Cardiac septum (tissue), 1 donor: ENCODE measurements at regions of chr2 and their contacts with region 1.

Region 1: DNA sequence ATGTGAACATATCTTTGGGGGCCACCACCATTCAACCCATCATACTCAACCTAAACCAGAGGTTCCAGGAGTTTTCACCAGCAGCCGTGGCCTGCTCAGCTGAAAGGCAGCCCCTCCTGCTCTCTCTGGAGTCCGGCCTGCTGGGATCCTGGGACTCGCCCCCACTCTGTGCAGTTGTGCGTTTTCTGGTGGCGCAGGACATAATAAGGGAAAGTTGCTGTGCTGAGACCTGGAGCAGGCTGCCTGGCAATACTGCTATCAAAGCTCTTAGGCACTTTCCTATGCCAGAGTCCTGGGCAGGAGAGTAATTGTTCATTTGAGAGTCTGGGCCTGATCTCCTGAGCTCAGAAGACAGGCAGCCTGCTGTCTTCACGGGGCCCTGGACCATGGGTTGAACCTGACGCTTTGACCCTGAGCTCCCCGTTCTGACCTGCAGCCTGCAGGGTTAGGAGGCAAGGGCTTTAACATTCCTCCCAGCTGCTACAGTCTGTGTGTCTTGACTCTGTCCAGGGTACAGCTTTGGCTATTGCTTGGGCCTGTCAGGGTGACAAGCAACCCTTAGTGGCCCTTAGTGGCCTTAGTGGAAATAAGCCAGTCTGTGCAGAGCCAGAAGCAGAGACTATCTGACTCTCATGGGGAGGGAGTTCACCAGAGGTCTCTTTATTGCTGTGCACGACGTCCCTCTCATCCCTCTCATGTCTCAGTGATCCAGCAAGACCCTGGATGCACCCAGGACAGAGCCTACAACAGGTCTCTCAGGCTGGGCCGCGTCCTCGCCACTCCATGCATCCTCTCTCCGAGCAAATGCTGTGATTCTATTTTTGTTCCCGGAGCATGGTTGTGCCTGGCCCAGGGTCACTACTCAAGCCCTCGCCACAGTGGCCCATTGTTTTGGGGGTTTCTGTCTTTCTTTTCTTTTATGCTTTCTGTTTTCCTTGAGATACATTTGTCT is 60.6 kb downstream of the ACKR3 start:
- DNase-seq: peak; percentile 70

Region 2: GRCh38 chr2:236579746-236580315 is 50.4 kb before region 1 on chr2:
- intact Hi-C with region 1: loop called (anchors 5 kb)
- DNase-seq: no peak

Region 3: DNA sequence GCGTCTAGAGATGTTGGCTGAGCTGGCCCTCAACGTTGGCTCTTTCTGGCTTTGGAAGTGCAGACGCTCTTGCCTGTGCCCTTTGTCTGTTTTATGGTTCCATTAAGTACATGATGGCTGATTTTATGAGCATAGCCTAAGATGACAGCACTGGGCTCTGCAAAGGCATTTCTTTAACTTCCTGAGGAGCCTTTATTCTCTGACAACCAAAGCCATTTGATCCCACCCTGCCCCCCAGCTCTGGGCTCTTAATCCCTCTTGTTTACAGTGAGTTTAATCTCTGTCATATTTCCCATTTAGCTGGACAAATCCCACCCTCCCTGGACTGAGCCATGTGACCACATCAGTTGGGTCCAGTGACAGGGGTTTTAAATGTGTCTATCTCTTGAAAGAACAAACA is 135.3 kb after region 1 on chr2:
- intact Hi-C with region 1: no loop called
- DNase-seq: peak; percentile 31

Region 4: DNA sequence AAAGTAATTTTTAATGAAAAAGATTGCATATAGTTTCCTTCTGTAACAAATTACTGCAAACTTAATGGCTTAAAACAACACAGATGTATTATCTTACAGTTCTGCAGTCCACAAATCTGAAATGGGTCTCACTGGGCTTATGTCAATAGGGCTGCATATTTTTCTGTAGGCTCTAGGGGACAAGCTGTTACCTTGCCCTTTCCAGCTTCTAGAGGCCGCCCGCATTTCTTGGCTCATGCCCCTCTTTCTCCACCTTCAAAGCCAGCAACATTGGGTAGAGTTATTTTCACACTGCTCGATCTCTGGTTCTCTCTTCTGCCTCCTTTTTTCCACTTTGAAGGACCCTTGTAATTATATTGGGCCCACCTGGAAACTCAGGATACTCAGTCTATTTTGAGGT is 472.2 kb after region 1 on chr2:
- intact Hi-C with region 1: no loop called
- DNase-seq: no peak